ENCODE measurements at regions of chr5 and their contacts with region 1.

Region 1: GRCh38 chr5:59799668-59800346 is 93.7 kb downstream of the PDE4D start:
- DNase-seq: peak in 1 of 2 experiments; percentile 56
- H3K4me3 ChIP-seq: no peak overlapping the region
- H3K4me3 Mint-ChIP-seq: no peak overlapping the region
- H3K27ac Mint-ChIP-seq: no peak overlapping the region
- H3K4me1 ChIP-seq: no peaks in the 10 kb centered on the region
- H3K4me1 Mint-ChIP-seq: no peaks in the 10 kb centered on the region
- H3K27me3 ChIP-seq: no peaks in the 10 kb centered on the region; the same call in 1 of the 2 replicates
- H3K27me3 Mint-ChIP-seq: peaks cover 15% of the 10 kb centered on the region
- CTCF ChIP-seq: peak; percentile 63 to 70

Region 2: GRCh38 chr5:59724482-59725391 is 75.1 kb before region 1 on chr5:
- CTCF ChIA-PET with region 1: no interaction called
- POLR2A ChIA-PET with region 1: no interaction called
- intact Hi-C with region 1: loop called (anchors 1 kb)
- DNase-seq: peak; percentile 48 to 64
- H3K4me3 ChIP-seq: no peak overlapping the region
- H3K4me3 Mint-ChIP-seq: no peak overlapping the region
- H3K27ac Mint-ChIP-seq: no peak overlapping the region
- H3K4me1 ChIP-seq: no peaks in the 10 kb centered on the region
- H3K4me1 Mint-ChIP-seq: no peaks in the 10 kb centered on the region
- H3K27me3 ChIP-seq: no peaks in the 10 kb centered on the region
- H3K27me3 Mint-ChIP-seq: peaks cover 3% of the 10 kb centered on the region
- CTCF ChIP-seq: peak; percentile 72 to 83

Region 3: GRCh38 chr5:60092671-60093422 is 293.0 kb after region 1 on chr5:
- CTCF ChIA-PET with region 1: no interaction called
- POLR2A ChIA-PET with region 1: no interaction called
- intact Hi-C with region 1: no loop called
- DNase-seq: no peak
- H3K4me3 ChIP-seq: no peak overlapping the region
- H3K4me3 Mint-ChIP-seq: no peak overlapping the region
- H3K27ac Mint-ChIP-seq: no peak overlapping the region
- H3K4me1 ChIP-seq: no peaks in the 10 kb centered on the region
- H3K4me1 Mint-ChIP-seq: no peaks in the 10 kb centered on the region
- H3K27me3 ChIP-seq: no peaks in the 10 kb centered on the region
- H3K27me3 Mint-ChIP-seq: no peaks in the 10 kb centered on the region
- CTCF ChIP-seq: no peak